Mammary epithelial cell (primary cell): ENCODE measurements at regions of chr7 and their contacts with region 1.

Region 1: GRCh38 chr7:15130666-15131541 is 228.4 kb upstream of the DGKB start:
- DNase-seq: peak; percentile 53
- H3K4me3 ChIP-seq: no peak overlapping the region
- H3K27ac ChIP-seq: no peak overlapping the region
- H3K4me1 ChIP-seq: peaks cover 10% of the 10 kb centered on the region
- H3K27me3 ChIP-seq: no peaks in the 10 kb centered on the region
- CTCF ChIP-seq: no peak

Region 2: GRCh38 chr7:15889507-15889906 is 758.6 kb after region 1 on chr7:
- CTCF ChIA-PET with region 1: no interaction called
- dilution Hi-C with region 1: no loop called
- in situ Hi-C with region 1: no loop called
- intact Hi-C with region 1: loop called (anchors 5 kb)
- DNase-seq: no peak
- H3K4me3 ChIP-seq: no peak overlapping the region
- H3K27ac ChIP-seq: no peak overlapping the region
- H3K4me1 ChIP-seq: no peaks in the 10 kb centered on the region
- H3K27me3 ChIP-seq: no peaks in the 10 kb centered on the region
- CTCF ChIP-seq: no peak